Psoas muscle (tissue), 8 donors: ENCODE measurements at regions of chr14 and their contacts with region 1.

Region 1: DNA sequence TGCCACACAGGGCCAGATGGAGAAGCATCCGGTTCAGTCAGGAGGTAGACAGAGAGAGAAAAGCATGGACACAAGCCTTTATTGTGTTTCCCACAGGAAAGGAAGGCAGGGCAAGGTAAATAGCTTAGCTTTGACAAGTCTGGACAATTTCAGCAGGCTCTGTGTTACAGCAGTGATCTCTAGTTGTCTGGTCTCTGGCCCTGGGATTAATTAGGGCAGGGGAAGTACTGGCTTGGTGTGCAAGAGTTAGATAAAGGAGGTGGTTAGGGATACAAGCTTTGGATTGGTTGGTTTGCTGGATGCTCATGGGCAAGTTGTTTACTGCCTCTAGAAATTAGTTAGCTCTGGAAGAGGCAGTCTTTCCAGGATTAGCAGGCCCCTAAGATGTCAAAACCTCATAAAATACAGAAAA is 15.1 kb upstream of the NGDN start:
- DNase-seq: no peak
- ATAC-seq: no peak
- H3K4me3 ChIP-seq: no peak overlapping the region
- H3K27ac ChIP-seq: no peak overlapping the region
- H3K4me1 ChIP-seq: no peaks in the 10 kb centered on the region
- H3K27me3 ChIP-seq: peaks cover 0 to 13% (median 0%) of the 10 kb centered on the region in 3 donors
- CTCF ChIP-seq: no peak

Region 2: DNA sequence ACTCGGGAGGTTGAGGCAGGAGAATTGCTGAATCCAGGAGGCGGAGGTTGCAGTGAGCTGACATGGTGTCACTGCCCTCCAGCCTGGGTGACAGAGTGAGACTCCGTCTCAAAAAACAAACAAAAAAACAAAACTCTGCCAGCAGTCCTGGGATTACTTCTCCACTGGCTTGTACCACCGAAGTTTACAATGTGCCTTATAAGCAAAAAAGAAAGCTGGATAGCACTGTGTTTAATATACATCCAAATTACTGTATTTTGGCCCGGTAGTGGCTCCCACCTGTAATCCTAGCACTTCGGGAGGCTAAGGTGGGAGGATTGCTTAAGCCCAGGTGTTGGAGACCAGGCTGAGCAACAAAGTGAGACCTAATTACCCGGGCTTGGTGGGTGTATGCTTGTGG is 185.3 kb before region 1 on chr14:
- intact Hi-C with region 1: loop called in 1 of 2 experiments (anchors 10 kb)
- DNase-seq: no peak
- ATAC-seq: no peak
- H3K4me3 ChIP-seq: no peak overlapping the region
- H3K27ac ChIP-seq: no peak overlapping the region
- H3K4me1 ChIP-seq: no peaks in the 10 kb centered on the region
- H3K27me3 ChIP-seq: peaks cover 0 to 6% (median 0%) of the 10 kb centered on the region in 3 donors
- CTCF ChIP-seq: no peak

Region 3: DNA sequence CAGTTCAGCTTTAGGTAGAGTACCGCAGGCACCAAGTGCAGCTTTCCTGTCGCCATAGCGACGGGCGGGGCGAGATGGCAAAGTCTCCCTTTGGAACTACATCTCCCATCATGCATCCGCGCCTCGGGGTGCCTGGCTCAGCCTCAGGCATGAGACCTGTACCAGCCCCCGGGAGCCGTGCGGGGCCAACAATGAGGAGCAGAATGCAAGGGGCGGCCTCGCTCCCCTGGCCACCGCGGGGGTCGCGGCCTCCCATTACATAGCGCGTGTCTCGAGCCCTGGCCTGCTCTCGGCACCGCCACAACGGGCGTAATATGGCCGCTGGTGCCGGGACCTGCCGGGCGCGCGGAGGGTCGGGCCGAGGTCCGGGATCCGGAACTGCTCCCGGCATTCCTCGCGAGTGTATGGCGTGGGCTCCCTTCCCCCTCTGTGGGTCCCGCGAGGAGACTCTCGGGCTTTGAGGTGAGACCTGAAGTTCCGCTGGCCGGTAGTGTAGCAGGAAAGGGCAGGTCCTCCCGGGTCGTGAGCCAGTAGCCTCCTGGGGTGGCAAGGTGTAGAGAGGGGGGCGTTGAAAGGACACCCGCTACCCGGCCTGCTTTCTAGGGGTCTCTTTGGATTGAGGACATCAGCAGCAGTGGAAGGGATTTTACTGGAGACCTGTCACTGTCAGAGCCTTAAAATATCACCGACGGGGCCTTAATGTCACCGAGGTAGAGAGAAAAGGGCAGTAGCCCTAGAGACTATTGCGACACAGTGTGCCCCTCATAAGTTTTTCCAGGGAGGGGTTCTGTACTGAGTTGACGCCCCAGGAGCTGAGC is 101.6 kb after region 1 on chr14 and contains the start of gene THTPA:
- intact Hi-C with region 1: no loop called
- DNase-seq: peak; percentile 93 to 95
- ATAC-seq: peak; percentile 91 to 94 (median 93)
- H3K4me3 ChIP-seq: peak within 1 kb of the TSS; percentile 99
- H3K27ac ChIP-seq: peak within 1 kb of the TSS; percentile 99
- H3K4me1 ChIP-seq: peaks cover 22% of the 10 kb centered on the region
- H3K27me3 ChIP-seq: no peaks in the 10 kb centered on the region
- CTCF ChIP-seq: no peak
- total RNA-seq, gene THTPA: 18.5 to 29.9 (median 23.2) TPM